ENCODE measurements at regions of chr5 and their contacts with region 1.

Region 1: GRCh38 chr5:35735718-35736117 is 118.1 kb downstream of the SPEF2 start:
- DNase-seq: no peak
- H3K4me3 ChIP-seq: no peak overlapping the region
- H3K27ac ChIP-seq: no peak overlapping the region
- H3K27me3 ChIP-seq: no peaks in the 10 kb centered on the region
- CTCF ChIP-seq: no peak

Region 2: DNA sequence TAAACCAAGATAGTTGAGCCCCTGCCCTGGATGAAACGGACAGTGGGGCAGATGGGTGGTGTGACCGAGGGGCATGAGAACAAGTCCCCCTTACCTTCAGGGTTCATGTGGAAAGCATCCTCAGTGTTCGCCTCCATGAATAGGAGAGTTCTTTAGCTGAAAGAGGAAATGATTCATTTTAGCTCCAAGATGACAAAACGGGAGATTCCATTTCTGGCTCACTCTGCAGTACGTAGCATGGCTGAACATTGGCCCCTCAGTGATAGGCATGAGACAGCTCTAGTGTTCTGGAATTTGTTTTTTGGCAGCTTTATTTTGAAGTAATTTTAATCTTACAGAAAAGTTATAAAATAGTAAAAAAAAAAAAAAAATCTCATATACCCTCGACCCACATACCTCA is 617.8 kb before region 1 on chr5:
- intact Hi-C with region 1: no loop called
- DNase-seq: no peak
- H3K4me3 ChIP-seq: no peak overlapping the region
- H3K27ac ChIP-seq: no peak overlapping the region
- H3K27me3 ChIP-seq: no peaks in the 10 kb centered on the region
- CTCF ChIP-seq: no peak

Region 3: DNA sequence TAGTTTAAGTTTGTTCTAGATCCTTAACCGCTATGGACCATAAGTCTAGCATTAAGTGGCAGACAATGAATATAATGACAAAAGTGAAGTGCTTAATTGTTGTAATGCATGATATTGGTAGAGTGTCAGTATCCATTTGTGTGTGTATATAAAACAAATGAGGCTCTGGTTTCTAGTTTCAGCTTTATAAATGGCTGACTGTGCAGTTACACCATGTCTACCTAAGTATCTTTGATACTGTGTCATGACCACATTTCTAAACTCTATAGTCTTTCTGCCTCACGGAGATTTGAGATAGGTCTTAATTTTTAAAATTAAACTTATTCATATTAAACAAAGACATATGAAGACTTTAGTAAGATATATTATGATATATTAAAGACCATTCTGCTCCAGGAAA is 26.0 kb before region 1 on chr5:
- intact Hi-C with region 1: loop called in 1 of 2 experiments (anchors 1 kb)
- DNase-seq: no peak
- H3K4me3 ChIP-seq: no peak overlapping the region
- H3K27ac ChIP-seq: no peak overlapping the region
- H3K27me3 ChIP-seq: no peaks in the 10 kb centered on the region
- CTCF ChIP-seq: no peak